Panc1 (cell line): ENCODE measurements at regions of chr22 and their contacts with region 1.

Region 1: GRCh38 chr22:37752466-37753087 is 55.2 kb upstream of the GCAT start:
- DNase-seq: peak; percentile 58
- ATAC-seq: peak; percentile 82
- H3K4me3 ChIP-seq: no peak overlapping the region
- H3K27ac ChIP-seq: peak overlapping the region; percentile 73
- H3K4me1 ChIP-seq: peaks cover 59% of the 10 kb centered on the region
- H3K27me3 ChIP-seq: no peaks in the 10 kb centered on the region
- CTCF ChIP-seq: no peak

Region 2: DNA sequence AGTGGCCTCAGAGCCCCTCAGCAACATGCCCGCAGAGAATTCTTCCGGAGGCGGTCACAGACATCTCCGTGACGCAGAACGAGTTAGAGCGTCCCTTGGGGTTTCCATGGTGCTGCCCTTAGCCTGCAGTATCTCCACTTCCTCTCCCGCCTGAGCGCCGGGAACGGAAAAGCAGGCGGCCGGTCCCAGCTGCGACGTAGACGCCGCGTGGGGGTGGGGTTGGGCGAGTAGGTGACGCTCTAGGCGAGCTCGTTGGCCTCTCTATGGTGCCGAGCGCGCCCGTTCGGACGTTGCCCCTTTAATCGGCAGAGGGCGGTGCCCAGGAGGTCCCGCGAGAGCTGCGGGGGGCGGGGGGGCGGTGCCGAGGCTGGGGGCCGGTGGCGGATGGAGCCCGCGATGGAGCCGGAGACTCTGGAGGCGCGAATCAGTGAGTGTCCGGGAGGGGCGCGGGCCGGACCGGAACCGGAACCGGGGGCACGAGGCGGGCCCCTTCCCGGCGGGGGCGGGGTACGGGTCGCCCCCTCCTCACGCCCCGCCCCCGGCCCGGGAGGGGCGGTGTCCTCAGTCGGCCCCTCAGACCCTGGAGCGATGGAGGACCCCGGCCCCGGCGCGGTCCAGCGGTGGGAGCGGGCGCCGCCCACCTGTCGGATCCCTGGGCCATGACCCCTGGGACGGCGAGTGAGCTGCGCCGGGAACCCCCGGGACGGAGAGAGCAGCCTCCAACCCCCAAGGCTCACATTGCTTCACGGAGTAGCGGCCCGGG is 143.9 kb before region 1 on chr22 and contains the start of gene GGA1:
- CTCF ChIA-PET with region 1: no interaction called
- POLR2A ChIA-PET with region 1: interaction called, 10 read pairs
- in situ Hi-C with region 1: no loop called
- intact Hi-C with region 1: no loop called
- DNase-seq: peak; percentile 84
- ATAC-seq: peak; percentile 93
- H3K4me3 ChIP-seq: peak within 1 kb of the TSS; percentile 68 to 74
- H3K27ac ChIP-seq: peak within 1 kb of the TSS; percentile 94
- H3K4me1 ChIP-seq: peaks cover 3% of the 10 kb centered on the region
- H3K27me3 ChIP-seq: no peaks in the 10 kb centered on the region
- CTCF ChIP-seq: no peak
- total RNA-seq, gene GGA1: 45.4 TPM

Region 3: GRCh38 chr22:37674951-37675929 is 77.3 kb before region 1 on chr22 and contains the start of gene LGALS1:
- CTCF ChIA-PET with region 1: no interaction called
- POLR2A ChIA-PET with region 1: interaction called, 10 read pairs
- in situ Hi-C with region 1: no loop called
- intact Hi-C with region 1: no loop called
- DNase-seq: peak; percentile 69
- ATAC-seq: peak; percentile 86
- H3K4me3 ChIP-seq: peak within 1 kb of the TSS; percentile 70 to 84
- H3K27ac ChIP-seq: peak within 1 kb of the TSS; percentile 87
- H3K4me1 ChIP-seq: peaks cover 21% of the 10 kb centered on the region
- H3K27me3 ChIP-seq: no peaks in the 10 kb centered on the region
- CTCF ChIP-seq: no peak
- total RNA-seq, gene LGALS1: 1,518 TPM

Region 4: GRCh38 chr22:37784829-37785493 is 32.4 kb after region 1 on chr22:
- CTCF ChIA-PET with region 1: interaction called, 10 read pairs
- POLR2A ChIA-PET with region 1: interaction called, 3 read pairs
- in situ Hi-C with region 1: no loop called
- intact Hi-C with region 1: no loop called
- DNase-seq: no peak
- ATAC-seq: no peak
- H3K4me3 ChIP-seq: no peak overlapping the region
- H3K27ac ChIP-seq: no peak overlapping the region
- H3K4me1 ChIP-seq: peaks cover 5% of the 10 kb centered on the region
- H3K27me3 ChIP-seq: no peaks in the 10 kb centered on the region
- CTCF ChIP-seq: no peak

Region 5: DNA sequence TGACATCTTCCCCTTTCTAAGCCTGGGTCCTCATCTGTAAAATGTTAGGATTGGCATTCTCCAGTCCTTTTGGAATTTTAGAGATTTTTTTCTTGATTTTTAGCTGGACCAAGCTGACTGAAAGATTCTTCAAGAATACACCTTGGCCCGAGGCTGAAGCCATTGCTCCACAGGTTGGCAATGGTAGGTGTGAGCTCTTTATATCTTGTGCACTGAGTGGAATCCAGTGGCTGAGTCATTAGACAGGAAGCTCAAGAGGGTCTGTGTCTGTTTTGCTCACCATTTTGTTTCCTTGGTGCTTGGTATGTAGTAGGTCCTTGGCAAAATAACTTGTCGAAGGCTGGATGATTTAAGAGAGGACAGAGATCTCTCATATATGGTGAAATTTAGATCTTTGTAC is 102.9 kb after region 1 on chr22:
- CTCF ChIA-PET with region 1: no interaction called
- POLR2A ChIA-PET with region 1: no interaction called
- in situ Hi-C with region 1: no loop called
- intact Hi-C with region 1: no loop called
- DNase-seq: no peak
- ATAC-seq: no peak
- H3K4me3 ChIP-seq: no peak overlapping the region
- H3K27ac ChIP-seq: no peak overlapping the region
- H3K4me1 ChIP-seq: no peaks in the 10 kb centered on the region
- H3K27me3 ChIP-seq: no peaks in the 10 kb centered on the region
- CTCF ChIP-seq: no peak